ENCODE measurements at regions of chr11 and their contacts with region 1.

Region 1: GRCh38 chr11:73242251-73243079 is 24.4 kb downstream of the P2RY2 start:
- DNase-seq: peak; percentile 68 to 87 (median 78)
- ATAC-seq: peak; percentile 35 to 52 (median 46)
- H3K4me3 ChIP-seq: peak overlapping the region in 8 of 12 donors; percentile 11 to 41 (median 20)
- H3K27ac ChIP-seq: peak overlapping the region in 7 of 12 donors; percentile 14 to 86 (median 60)
- H3K4me1 ChIP-seq: peaks cover 12 to 60% (median 46%) of the 10 kb centered on the region in 12 donors
- H3K27me3 ChIP-seq: no peaks in the 10 kb centered on the region
- CTCF ChIP-seq: peak; percentile 80 to 96 (median 90)
- POLR2A ChIP-seq: no peak

Region 2: DNA sequence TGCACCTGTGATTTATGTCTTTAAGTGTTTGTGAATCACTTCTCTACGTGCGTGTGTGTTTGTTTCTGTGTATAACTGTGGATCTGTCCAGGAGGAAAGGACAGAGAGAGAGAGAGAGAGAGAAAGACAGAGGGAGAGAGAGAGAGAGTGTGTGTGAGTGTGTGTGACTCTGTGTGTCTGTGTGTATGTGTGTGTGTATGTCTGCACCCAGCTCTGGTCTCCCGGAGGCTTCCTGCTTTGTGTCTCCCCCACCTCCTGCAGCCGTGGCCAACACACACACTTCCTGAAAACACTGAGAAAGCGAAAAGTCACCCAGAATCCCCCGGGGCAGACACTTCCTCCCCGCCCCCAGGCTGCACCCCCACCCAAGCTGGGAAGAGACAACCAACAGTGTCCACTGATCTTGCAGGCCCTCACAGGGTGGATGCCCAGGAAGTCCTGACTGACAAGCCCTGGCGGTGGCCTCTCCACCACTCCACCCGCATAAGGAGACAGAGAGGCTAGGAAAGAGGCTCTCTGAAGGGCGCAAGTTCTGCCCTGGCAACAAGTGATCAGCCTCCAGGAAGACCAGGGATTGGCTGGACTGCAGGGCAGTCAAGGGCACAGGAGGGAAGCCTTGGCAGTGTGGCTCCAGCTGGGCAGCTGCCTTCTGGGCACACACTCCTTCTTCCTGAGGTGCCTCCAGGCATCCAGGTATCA is 520.3 kb before region 1 on chr11:
- intact Hi-C with region 1: loop called in 5 of 10 experiments (anchors 5 to 10 kb)
- DNase-seq: peak; percentile 91 to 94 (median 92)
- ATAC-seq: peak; percentile 79 to 84 (median 81)
- H3K4me3 ChIP-seq: peak overlapping the region; percentile 25 to 86 (median 71)
- H3K27ac ChIP-seq: peak overlapping the region; percentile 82 to 98 (median 92)
- H3K4me1 ChIP-seq: peaks cover 3 to 84% (median 47%) of the 10 kb centered on the region in 12 donors
- H3K27me3 ChIP-seq: no peaks in the 10 kb centered on the region
- CTCF ChIP-seq: no peak
- POLR2A ChIP-seq: peak in 1 of 2 donors; percentile 66

Region 3: DNA sequence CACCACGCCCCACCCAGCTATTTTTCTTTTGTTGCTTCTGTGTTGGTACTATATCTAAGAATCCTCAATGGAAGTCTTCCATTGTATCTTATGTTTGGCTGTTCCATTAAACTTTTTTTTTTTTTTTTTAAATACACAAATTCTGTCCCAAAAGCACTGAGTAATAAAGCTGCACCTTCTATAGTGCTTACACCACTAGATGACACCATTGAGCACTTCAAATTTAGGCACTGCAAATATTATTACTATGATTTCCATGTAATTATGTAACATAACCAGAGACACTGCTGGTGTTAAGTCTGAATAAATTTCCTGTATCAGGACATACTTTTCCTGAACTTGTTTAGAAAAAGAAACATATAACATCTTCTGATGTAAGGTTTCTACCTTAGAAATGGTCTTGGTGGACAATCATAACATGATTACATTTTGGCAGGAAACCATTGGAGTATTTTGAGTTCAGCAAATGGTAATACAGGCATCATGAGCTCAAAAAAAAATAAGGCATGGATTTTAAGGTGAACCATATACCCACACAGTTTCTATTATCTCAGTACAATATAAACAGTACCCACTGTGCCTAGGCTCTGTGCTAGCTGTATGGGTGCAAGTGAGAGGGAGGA is 317.8 kb before region 1 on chr11:
- intact Hi-C with region 1: loop called in 1 of 10 experiments (anchors 10 kb)
- DNase-seq: no peak
- ATAC-seq: peak in 3 of 4 donors; percentile 33 to 58 (median 52)
- H3K4me3 ChIP-seq: no peak overlapping the region
- H3K27ac ChIP-seq: peak overlapping the region in 1 of 12 donors; percentile 3
- H3K4me1 ChIP-seq: peaks cover 0 to 60% (median 25%) of the 10 kb centered on the region in 12 donors
- H3K27me3 ChIP-seq: no peaks in the 10 kb centered on the region
- CTCF ChIP-seq: peak; percentile 36 to 74 (median 59)
- POLR2A ChIP-seq: no peak

Region 4: DNA sequence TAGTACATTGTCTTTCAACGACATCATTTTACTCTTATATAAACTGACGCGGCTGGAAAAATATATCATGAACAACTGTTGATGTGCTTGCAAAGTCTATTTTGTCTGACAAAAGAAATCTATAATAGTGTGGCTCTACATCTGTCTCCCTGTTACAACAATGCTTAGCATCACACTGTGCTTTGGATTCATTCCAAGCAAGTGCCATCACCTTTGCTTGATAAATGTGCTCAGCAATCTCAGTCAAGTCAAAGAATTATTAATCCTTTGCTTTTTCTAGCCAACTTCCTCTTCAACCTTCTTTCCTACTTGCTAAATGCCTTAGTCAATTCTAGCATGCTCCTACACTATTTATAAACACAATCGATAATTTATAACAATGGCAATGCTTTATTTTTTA is 240.8 kb before region 1 on chr11:
- intact Hi-C with region 1: no loop called
- DNase-seq: no peak
- ATAC-seq: peak in 3 of 4 donors; percentile 45 to 61 (median 53)
- H3K4me3 ChIP-seq: no peak overlapping the region
- H3K27ac ChIP-seq: peak overlapping the region in 1 of 12 donors; percentile 28
- H3K4me1 ChIP-seq: peaks cover 0 to 37% (median 9%) of the 10 kb centered on the region in 12 donors
- H3K27me3 ChIP-seq: no peaks in the 10 kb centered on the region
- CTCF ChIP-seq: no peak
- POLR2A ChIP-seq: no peak

Region 5: DNA sequence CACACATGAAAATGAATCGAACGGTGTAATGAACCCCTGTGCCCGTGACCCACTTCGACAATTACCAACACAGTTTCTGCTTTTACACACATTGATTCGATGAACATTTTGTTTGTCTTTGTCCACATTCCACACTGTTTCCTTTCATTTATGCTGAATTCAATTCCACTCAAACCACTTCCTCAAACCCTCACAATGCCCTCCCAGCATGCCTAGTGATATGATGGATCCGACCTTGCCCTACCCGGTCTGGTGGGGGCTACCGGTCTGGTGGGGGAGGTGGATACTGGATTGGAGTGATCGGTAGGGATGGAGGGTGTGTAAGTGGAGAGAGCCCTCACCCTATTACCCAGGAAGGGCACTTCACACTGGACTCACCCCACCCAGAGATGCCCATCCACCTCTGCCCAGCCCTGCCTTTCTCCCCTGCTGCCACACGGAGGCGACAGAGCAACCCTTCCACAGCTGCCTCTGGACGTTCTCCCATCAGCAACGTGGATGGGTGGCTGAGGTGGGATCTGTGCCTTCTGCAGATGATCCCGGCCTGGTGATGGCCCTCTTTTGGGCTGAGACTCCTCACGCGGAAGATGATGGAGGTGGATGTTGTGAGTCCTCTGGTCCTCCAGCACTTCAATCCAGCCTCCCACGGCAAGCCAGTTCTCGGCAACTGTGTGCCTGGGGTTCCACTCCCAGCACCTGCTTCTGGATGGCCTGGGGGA is 57.4 kb before region 1 on chr11:
- intact Hi-C with region 1: loop called (anchors 1 to 5 kb)
- DNase-seq: peak; percentile 59 to 88 (median 78)
- ATAC-seq: peak; percentile 16 to 63 (median 54)
- H3K4me3 ChIP-seq: peak overlapping the region in 1 of 12 donors; percentile 28
- H3K27ac ChIP-seq: peak overlapping the region in 4 of 12 donors; percentile 8 to 67 (median 30)
- H3K4me1 ChIP-seq: peaks cover 3 to 57% (median 24%) of the 10 kb centered on the region in 12 donors
- H3K27me3 ChIP-seq: no peaks in the 10 kb centered on the region
- CTCF ChIP-seq: peak; percentile 75 to 88 (median 84)
- POLR2A ChIP-seq: no peak

Region 6: DNA sequence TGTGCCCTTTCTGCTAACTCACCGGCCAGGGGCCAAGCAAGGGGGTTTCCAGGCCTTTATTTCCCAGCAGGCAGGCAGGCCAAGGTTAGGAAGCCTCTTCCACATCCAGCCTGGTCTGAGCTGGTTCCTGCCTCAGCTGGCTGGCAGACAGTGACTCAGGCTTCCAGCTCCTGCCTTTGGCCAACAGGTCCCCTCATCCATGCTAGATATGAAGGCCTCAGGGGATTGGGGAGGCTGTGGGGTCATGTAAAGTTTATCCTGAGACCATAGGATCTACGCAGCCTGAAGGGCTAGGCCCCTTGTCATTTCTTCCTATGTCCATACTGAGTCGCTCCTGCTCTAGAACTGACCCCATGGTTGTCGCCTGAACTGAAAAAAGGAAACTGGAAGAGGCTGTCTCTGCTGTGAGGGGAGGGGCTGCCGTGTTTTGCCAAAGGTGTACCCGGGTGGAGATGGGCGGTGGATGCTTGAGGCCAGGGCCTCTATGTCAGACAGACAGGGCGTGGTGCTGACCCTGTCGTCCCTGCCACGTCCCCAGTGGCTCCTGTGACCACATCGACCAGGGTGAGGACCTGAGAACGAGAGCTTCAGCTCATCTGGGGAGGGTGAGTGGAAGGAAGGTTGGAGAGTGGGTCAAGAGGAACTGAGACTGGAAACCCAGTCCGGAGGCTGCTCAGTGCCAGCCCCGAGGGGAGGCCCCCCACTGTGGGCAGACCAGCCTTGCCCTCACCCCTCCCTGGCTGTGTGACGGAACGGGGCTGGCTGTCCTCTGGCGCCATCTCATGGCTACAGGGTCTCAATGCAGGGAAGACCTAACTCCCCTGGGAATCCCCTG is 46.6 kb after region 1 on chr11:
- intact Hi-C with region 1: loop called in 8 of 10 experiments (anchors 1 to 10 kb)
- DNase-seq: peak; percentile 78 to 88 (median 83)
- ATAC-seq: peak; percentile 57 to 84 (median 80)
- H3K4me3 ChIP-seq: peak overlapping the region in 9 of 12 donors; percentile 14 to 54 (median 41)
- H3K27ac ChIP-seq: peak overlapping the region in 11 of 12 donors; percentile 19 to 95 (median 58)
- H3K4me1 ChIP-seq: peaks cover 0 to 67% (median 29%) of the 10 kb centered on the region in 12 donors
- H3K27me3 ChIP-seq: no peaks in the 10 kb centered on the region
- CTCF ChIP-seq: peak; percentile 88 to 96 (median 92)
- POLR2A ChIP-seq: no peak

Region 7: GRCh38 chr11:73314117-73314961 is 71.9 kb after region 1 on chr11:
- intact Hi-C with region 1: no loop called
- DNase-seq: peak; percentile 61 to 80 (median 69)
- ATAC-seq: peak; percentile 41 to 66 (median 50)
- H3K4me3 ChIP-seq: peak overlapping the region in 10 of 12 donors; percentile 13 to 90 (median 72)
- H3K27ac ChIP-seq: peak overlapping the region; percentile 66 to 100 (median 98)
- H3K4me1 ChIP-seq: peaks cover 5 to 100% (median 95%) of the 10 kb centered on the region in 12 donors
- H3K27me3 ChIP-seq: peaks cover 0 to 3% (median 0%) of the 10 kb centered on the region in 9 donors
- CTCF ChIP-seq: peak in 2 of 12 donors; percentile 7 to 19
- POLR2A ChIP-seq: no peak

Measured in heart left ventricle (tissue), 16 donors.